ENCODE measurements at regions of chr5 and their contacts with region 1.

Region 1: GRCh38 chr5:150778517-150779396 is at the start of gene SMIM3:
- DNase-seq: peak; percentile 76
- H3K4me3 Mint-ChIP-seq: peak within 1 kb of the TSS; percentile 93
- H3K27ac Mint-ChIP-seq: peak within 1 kb of the TSS; percentile 89
- H3K4me1 Mint-ChIP-seq: peaks cover 61% of the 10 kb centered on the region
- H3K27me3 Mint-ChIP-seq: no peaks in the 10 kb centered on the region
- total RNA-seq, gene SMIM3: 17.4 to 19.1 TPM

Region 2: DNA sequence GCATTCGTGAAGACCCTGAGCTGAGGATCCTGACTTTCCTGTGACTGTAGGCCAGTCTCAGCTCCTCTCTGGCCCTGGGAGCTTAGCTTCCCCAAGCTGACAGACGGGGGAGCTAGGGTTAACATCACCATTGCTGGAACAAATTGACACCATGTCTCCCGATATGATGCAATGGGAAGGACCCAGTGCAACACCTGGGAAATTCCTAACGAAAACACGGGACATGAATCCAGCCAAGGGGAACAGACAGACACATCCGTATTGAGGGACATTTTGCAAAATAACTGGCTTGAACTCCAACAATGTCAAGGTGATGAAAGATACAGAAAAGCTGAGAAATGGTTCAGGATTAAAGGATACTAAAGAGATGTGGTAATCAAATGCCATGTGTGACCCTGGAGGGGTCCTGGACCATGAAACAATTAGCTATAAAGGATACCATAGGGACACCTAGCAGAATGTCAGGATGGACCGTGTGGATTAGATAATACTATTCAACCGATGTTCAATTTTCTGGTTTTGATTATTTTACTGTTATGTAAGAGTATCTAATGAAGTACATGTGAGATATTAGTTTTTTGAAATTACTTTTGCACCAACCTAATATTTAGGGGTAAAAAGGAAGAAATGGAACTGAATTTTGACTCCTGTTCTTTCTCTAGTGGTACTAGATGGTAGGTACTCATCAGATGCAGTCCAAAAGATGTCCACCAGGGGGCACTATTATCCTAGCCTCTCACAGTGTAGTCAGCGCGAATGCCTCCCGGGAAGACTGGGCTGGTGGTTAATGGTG is 218.2 kb before region 1 on chr5:
- CTCF ChIA-PET with region 1: interaction called, 15 read pairs
- POLR2A ChIA-PET with region 1: no interaction called
- DNase-seq: peak; percentile 84
- H3K4me3 Mint-ChIP-seq: no peak overlapping the region
- H3K27ac Mint-ChIP-seq: no peak overlapping the region
- H3K4me1 Mint-ChIP-seq: no peaks in the 10 kb centered on the region
- H3K27me3 Mint-ChIP-seq: peaks cover 4% of the 10 kb centered on the region

Region 3: DNA sequence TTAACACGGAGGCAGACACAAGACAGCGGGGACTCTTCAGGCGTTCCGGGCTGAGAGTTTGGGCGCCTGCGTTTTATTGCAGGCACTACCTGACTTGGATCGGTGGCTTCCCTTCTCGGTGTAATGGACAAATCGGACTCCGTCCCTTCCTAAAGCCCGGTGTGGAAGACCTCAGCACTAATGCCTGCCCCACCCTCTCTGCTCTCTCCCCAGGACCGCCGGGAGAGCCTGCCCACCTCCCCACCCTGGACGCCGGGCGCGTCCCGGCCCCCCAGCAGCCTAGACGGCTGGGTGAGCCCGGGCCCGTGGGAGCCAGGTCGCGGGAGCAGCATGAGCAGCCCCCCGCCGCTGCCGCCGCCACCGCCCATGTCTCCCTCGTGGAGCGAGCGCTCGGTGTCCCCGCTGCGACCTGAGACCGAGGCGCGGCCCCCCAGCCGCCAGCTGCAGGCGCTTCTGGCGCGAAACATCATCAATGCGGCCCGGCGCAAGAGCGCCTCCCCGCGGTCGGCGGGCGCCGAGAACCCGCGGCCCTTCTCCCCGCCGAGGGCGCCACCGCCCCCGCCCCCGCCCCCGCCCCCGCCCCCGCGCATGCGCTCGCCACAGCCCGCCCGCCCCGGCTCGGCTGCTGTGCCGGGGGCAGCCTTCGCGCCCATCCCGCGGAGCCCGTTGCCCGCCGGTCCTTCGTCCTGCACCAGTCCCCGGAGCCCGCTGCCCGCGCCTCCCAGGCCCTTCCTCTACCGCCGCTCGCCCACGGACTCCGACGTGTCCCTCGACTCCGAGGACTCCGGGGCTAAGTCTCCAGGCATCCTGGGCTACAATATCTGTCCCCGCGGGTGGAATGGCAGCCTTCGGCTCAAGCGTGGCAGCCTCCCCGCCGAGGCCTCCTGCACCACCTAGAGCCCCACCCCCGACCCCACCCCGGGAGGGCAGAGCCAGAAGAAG is 122.3 kb before region 1 on chr5:
- CTCF ChIA-PET with region 1: interaction called, 11 read pairs
- POLR2A ChIA-PET with region 1: no interaction called
- DNase-seq: peak; percentile 84
- H3K4me3 Mint-ChIP-seq: peak overlapping the region; percentile 76
- H3K27ac Mint-ChIP-seq: no peak overlapping the region
- H3K4me1 Mint-ChIP-seq: peaks cover 7% of the 10 kb centered on the region
- H3K27me3 Mint-ChIP-seq: peaks cover 7% of the 10 kb centered on the region

Region 4: GRCh38 chr5:150758531-150759333 is 20.0 kb before region 1 on chr5 and contains the start of gene DCTN4:
- CTCF ChIA-PET with region 1: interaction called, 24 read pairs
- POLR2A ChIA-PET with region 1: interaction called, 28 read pairs
- DNase-seq: peak; percentile 93
- H3K4me3 Mint-ChIP-seq: no peak within 1 kb of the TSS
- H3K27ac Mint-ChIP-seq: no peak within 1 kb of the TSS
- H3K4me1 Mint-ChIP-seq: peaks cover 37% of the 10 kb centered on the region
- H3K27me3 Mint-ChIP-seq: no peaks in the 10 kb centered on the region
- total RNA-seq, gene DCTN4: 38.6 to 40.6 TPM

Region 5: GRCh38 chr5:150789943-150790611 is 11.3 kb after region 1 on chr5:
- CTCF ChIA-PET with region 1: interaction called, 22 read pairs
- POLR2A ChIA-PET with region 1: interaction called, 10 read pairs
- DNase-seq: peak; percentile 70
- H3K4me3 Mint-ChIP-seq: peak overlapping the region; percentile 40
- H3K27ac Mint-ChIP-seq: peak overlapping the region; percentile 71
- H3K4me1 Mint-ChIP-seq: peaks cover 45% of the 10 kb centered on the region
- H3K27me3 Mint-ChIP-seq: no peaks in the 10 kb centered on the region

Region 6: DNA sequence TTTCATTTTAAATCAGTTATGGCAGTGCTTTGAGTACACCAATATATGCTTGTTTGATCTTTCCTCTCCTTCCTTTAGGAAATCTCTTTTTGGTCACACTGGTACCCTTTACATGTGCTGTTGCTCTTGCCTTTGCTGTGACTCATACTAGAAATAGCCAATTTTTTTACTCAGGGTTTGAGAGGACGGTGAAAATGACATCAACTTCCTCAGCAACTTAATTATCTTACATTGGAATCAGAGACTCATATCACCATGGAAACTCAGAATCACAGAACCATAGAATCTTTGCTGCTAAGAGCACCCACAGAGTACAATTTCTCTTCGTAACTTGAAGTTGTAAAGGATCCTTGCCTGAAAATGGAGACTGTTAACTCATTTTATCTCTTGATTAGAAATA is 139.9 kb after region 1 on chr5:
- CTCF ChIA-PET with region 1: no interaction called
- POLR2A ChIA-PET with region 1: no interaction called
- DNase-seq: no peak
- H3K4me3 Mint-ChIP-seq: no peak overlapping the region
- H3K27ac Mint-ChIP-seq: no peak overlapping the region
- H3K4me1 Mint-ChIP-seq: no peaks in the 10 kb centered on the region
- H3K27me3 Mint-ChIP-seq: no peaks in the 10 kb centered on the region

Region 7: GRCh38 chr5:151492729-151493128 is 714.0 kb after region 1 on chr5:
- CTCF ChIA-PET with region 1: no interaction called
- POLR2A ChIA-PET with region 1: no interaction called
- DNase-seq: no peak
- H3K4me3 Mint-ChIP-seq: no peak overlapping the region
- H3K27ac Mint-ChIP-seq: no peak overlapping the region
- H3K4me1 Mint-ChIP-seq: no peaks in the 10 kb centered on the region
- H3K27me3 Mint-ChIP-seq: no peaks in the 10 kb centered on the region